ENCODE measurements at regions of chr11 and their contacts with region 1.

Region 1: GRCh38 chr11:96235751-96236150 is 107.2 kb downstream of the MAML2 start:
- DNase-seq: no peak
- H3K4me3 Mint-ChIP-seq: no peak overlapping the region
- H3K27ac Mint-ChIP-seq: peak overlapping the region; percentile 63
- H3K4me1 Mint-ChIP-seq: peaks cover 7% of the 10 kb centered on the region
- H3K27me3 Mint-ChIP-seq: no peaks in the 10 kb centered on the region
- CTCF ChIP-seq: no peak

Region 2: GRCh38 chr11:96134602-96135001 is 101.1 kb before region 1 on chr11:
- CTCF ChIA-PET with region 1: no interaction called
- POLR2A ChIA-PET with region 1: no interaction called
- intact Hi-C with region 1: no loop called
- DNase-seq: no peak
- H3K4me3 Mint-ChIP-seq: no peak overlapping the region
- H3K27ac Mint-ChIP-seq: no peak overlapping the region
- H3K4me1 Mint-ChIP-seq: no peaks in the 10 kb centered on the region
- H3K27me3 Mint-ChIP-seq: no peaks in the 10 kb centered on the region
- CTCF ChIP-seq: no peak

Region 3: GRCh38 chr11:96155627-96156378 is 79.9 kb before region 1 on chr11:
- CTCF ChIA-PET with region 1: interaction called, 14 read pairs
- POLR2A ChIA-PET with region 1: no interaction called
- intact Hi-C with region 1: no loop called
- DNase-seq: peak; percentile 93
- H3K4me3 Mint-ChIP-seq: peak overlapping the region; percentile 51
- H3K27ac Mint-ChIP-seq: peak overlapping the region; percentile 88
- H3K4me1 Mint-ChIP-seq: peaks cover 29% of the 10 kb centered on the region
- H3K27me3 Mint-ChIP-seq: no peaks in the 10 kb centered on the region
- CTCF ChIP-seq: peak; percentile 28

Region 4: GRCh38 chr11:96188243-96189006 is 47.3 kb before region 1 on chr11:
- CTCF ChIA-PET with region 1: interaction called, 3 read pairs
- POLR2A ChIA-PET with region 1: interaction called, 17 read pairs
- intact Hi-C with region 1: no loop called
- DNase-seq: peak; percentile 87
- H3K4me3 Mint-ChIP-seq: peak overlapping the region; percentile 48
- H3K27ac Mint-ChIP-seq: peak overlapping the region; percentile 96
- H3K4me1 Mint-ChIP-seq: peaks cover 38% of the 10 kb centered on the region
- H3K27me3 Mint-ChIP-seq: no peaks in the 10 kb centered on the region
- CTCF ChIP-seq: no peak

Region 5: GRCh38 chr11:96306933-96307775 is 71.4 kb after region 1 on chr11:
- CTCF ChIA-PET with region 1: interaction called, 7 read pairs
- POLR2A ChIA-PET with region 1: interaction called, 54 read pairs
- intact Hi-C with region 1: no loop called
- DNase-seq: peak; percentile 100
- H3K4me3 Mint-ChIP-seq: peak overlapping the region; percentile 68
- H3K27ac Mint-ChIP-seq: peak overlapping the region; percentile 97
- H3K4me1 Mint-ChIP-seq: peaks cover 59% of the 10 kb centered on the region
- H3K27me3 Mint-ChIP-seq: no peaks in the 10 kb centered on the region
- CTCF ChIP-seq: no peak

Region 6: GRCh38 chr11:96389720-96390487 is 154.2 kb after region 1 on chr11 and contains the starts of genes CCDC82 and JRKL:
- CTCF ChIA-PET with region 1: interaction called, 6 read pairs
- POLR2A ChIA-PET with region 1: interaction called, 12 read pairs
- intact Hi-C with region 1: no loop called
- DNase-seq: peak; percentile 98
- H3K4me3 Mint-ChIP-seq: peak within 1 kb of the TSS; percentile 77
- H3K27ac Mint-ChIP-seq: peak within 1 kb of the TSS; percentile 93
- H3K4me1 Mint-ChIP-seq: peaks cover 11% of the 10 kb centered on the region
- H3K27me3 Mint-ChIP-seq: no peaks in the 10 kb centered on the region
- CTCF ChIP-seq: no peak
- total RNA-seq, gene CCDC82: 15.8 and 21.4 TPM in 2 replicates
- total RNA-seq, gene JRKL: 11.5 and 16.3 TPM in 2 replicates

Measured in MCF 10A (cell line).